Caco-2 (cell line): ENCODE measurements at regions of chr4 and their contacts with region 1.

Region 1: GRCh38 chr4:128809477-128810330 is at the start of gene JADE1:
- DNase-seq: peak; percentile 93 to 95
- H3K4me3 ChIP-seq: peak within 1 kb of the TSS; percentile 67
- H3K4me3 Mint-ChIP-seq: peak within 1 kb of the TSS; percentile 93
- H3K27ac Mint-ChIP-seq: peak within 1 kb of the TSS; percentile 97
- H3K4me1 ChIP-seq: peaks cover 26% of the 10 kb centered on the region
- H3K4me1 Mint-ChIP-seq: peaks cover 8% of the 10 kb centered on the region
- H3K27me3 ChIP-seq: no peaks in the 10 kb centered on the region
- H3K27me3 Mint-ChIP-seq: no peaks in the 10 kb centered on the region
- CTCF ChIP-seq: peak; percentile 57 to 78
- total RNA-seq, gene JADE1: 30.2 and 32.5 TPM in 2 replicates

Region 2: GRCh38 chr4:128364565-128364964 is 445.1 kb before region 1 on chr4:
- CTCF ChIA-PET with region 1: no interaction called
- POLR2A ChIA-PET with region 1: no interaction called
- intact Hi-C with region 1: no loop called
- DNase-seq: no peak
- H3K4me3 ChIP-seq: no peak overlapping the region
- H3K4me3 Mint-ChIP-seq: no peak overlapping the region
- H3K27ac Mint-ChIP-seq: no peak overlapping the region
- H3K4me1 ChIP-seq: no peaks in the 10 kb centered on the region
- H3K4me1 Mint-ChIP-seq: no peaks in the 10 kb centered on the region
- H3K27me3 ChIP-seq: no peaks in the 10 kb centered on the region
- H3K27me3 Mint-ChIP-seq: no peaks in the 10 kb centered on the region
- CTCF ChIP-seq: no peak

Region 3: GRCh38 chr4:128385683-128386304 is 423.9 kb before region 1 on chr4:
- CTCF ChIA-PET with region 1: no interaction called
- POLR2A ChIA-PET with region 1: no interaction called
- intact Hi-C with region 1: loop called (anchors 1 kb)
- DNase-seq: no peak
- H3K4me3 ChIP-seq: no peak overlapping the region
- H3K4me3 Mint-ChIP-seq: no peak overlapping the region
- H3K27ac Mint-ChIP-seq: no peak overlapping the region
- H3K4me1 ChIP-seq: peaks cover 32% of the 10 kb centered on the region
- H3K4me1 Mint-ChIP-seq: peaks cover 8% of the 10 kb centered on the region
- H3K27me3 ChIP-seq: no peaks in the 10 kb centered on the region
- H3K27me3 Mint-ChIP-seq: no peaks in the 10 kb centered on the region
- CTCF ChIP-seq: no peak

Region 4: DNA sequence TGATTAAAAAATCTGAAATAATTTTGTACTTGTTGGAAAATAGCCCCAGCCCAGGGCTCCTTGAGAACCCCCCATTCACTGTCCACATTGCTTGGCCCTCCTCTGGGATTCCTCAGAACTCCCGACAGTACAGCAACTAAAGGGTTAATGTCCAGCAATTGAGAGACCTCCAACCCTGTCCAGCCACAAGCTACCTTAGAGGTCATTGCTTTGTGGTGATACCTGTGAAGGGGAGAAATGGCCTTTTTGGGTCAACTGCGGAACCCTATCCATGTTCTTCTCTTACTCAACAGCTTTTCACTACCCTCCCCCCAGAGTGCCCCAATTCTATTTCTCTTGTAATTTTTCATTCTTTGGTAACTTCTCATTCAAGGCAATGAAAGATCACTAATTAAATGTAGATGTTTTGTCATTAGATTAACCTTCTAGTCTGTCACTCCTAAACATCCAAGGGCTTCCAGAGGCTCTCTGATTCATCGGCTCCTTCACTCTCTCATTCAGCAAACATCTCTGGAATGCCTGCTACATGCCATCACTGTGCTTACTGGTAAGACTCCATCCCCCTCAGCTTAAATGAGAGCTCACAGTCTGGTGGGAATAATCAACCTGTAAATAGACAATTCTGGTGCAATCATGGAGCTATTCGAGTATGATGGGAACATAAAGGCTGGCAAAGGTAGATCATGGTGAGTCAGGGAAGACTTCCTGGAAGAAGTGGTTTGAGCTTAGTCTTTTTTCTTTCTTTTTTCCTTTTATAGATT is 280.7 kb before region 1 on chr4:
- CTCF ChIA-PET with region 1: no interaction called
- POLR2A ChIA-PET with region 1: no interaction called
- intact Hi-C with region 1: loop called (anchors 1 kb)
- DNase-seq: peak; percentile 69 to 80
- H3K4me3 ChIP-seq: no peak overlapping the region
- H3K4me3 Mint-ChIP-seq: peak overlapping the region; percentile 46
- H3K27ac Mint-ChIP-seq: peak overlapping the region; percentile 95
- H3K4me1 ChIP-seq: peaks cover 49% of the 10 kb centered on the region
- H3K4me1 Mint-ChIP-seq: peaks cover 37% of the 10 kb centered on the region
- H3K27me3 ChIP-seq: no peaks in the 10 kb centered on the region
- H3K27me3 Mint-ChIP-seq: no peaks in the 10 kb centered on the region
- CTCF ChIP-seq: no peak

Region 5: GRCh38 chr4:128635141-128635954 is 174.4 kb before region 1 on chr4:
- CTCF ChIA-PET with region 1: no interaction called
- POLR2A ChIA-PET with region 1: no interaction called
- intact Hi-C with region 1: loop called (anchors 1 kb)
- DNase-seq: peak; percentile 89 to 90
- H3K4me3 ChIP-seq: 0 out of 2 replicates have a peak overlapping the region, but pooled peaks have one; percentile 11
- H3K4me3 Mint-ChIP-seq: peak overlapping the region; percentile 76
- H3K27ac Mint-ChIP-seq: peak overlapping the region; percentile 98
- H3K4me1 ChIP-seq: peaks cover 14% of the 10 kb centered on the region
- H3K4me1 Mint-ChIP-seq: peaks cover 25% of the 10 kb centered on the region
- H3K27me3 ChIP-seq: no peaks in the 10 kb centered on the region
- H3K27me3 Mint-ChIP-seq: no peaks in the 10 kb centered on the region
- CTCF ChIP-seq: no peak

Region 6: GRCh38 chr4:128793859-128794672 is 15.6 kb before region 1 on chr4:
- CTCF ChIA-PET with region 1: no interaction called
- POLR2A ChIA-PET with region 1: no interaction called
- intact Hi-C with region 1: no loop called
- DNase-seq: peak in 1 of 2 experiments; percentile 24
- H3K4me3 ChIP-seq: no peak overlapping the region
- H3K4me3 Mint-ChIP-seq: no peak overlapping the region
- H3K27ac Mint-ChIP-seq: peak overlapping the region; percentile 72
- H3K4me1 ChIP-seq: peaks cover 7% of the 10 kb centered on the region
- H3K4me1 Mint-ChIP-seq: peaks cover 7% of the 10 kb centered on the region
- H3K27me3 ChIP-seq: no peaks in the 10 kb centered on the region
- H3K27me3 Mint-ChIP-seq: no peaks in the 10 kb centered on the region
- CTCF ChIP-seq: no peak

Region 7: DNA sequence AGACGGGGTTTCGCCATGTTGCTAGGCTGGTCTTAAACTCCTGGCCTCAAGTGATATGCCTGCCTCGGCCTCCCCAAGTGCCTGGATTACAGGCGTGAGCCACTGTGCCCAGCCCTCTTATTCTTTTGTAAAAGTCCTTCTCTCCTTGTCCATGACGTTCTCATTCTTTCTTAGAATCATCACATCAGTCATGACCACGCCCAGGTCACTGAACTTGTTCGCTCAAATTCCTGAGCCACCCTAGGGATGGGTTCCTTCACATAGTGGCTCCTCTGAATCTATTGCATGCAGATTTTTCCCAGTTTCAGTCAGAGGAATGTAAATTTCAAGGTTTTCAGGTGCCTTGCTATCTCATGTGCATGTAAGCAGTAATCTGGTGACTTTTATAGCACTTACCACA is 15.5 kb after region 1 on chr4:
- CTCF ChIA-PET with region 1: no interaction called
- POLR2A ChIA-PET with region 1: no interaction called
- intact Hi-C with region 1: loop called (anchors 2 kb)
- DNase-seq: peak; percentile 67 to 78
- H3K4me3 ChIP-seq: no peak overlapping the region
- H3K4me3 Mint-ChIP-seq: no peak overlapping the region
- H3K27ac Mint-ChIP-seq: peak overlapping the region; percentile 91
- H3K4me1 ChIP-seq: peaks cover 50% of the 10 kb centered on the region
- H3K4me1 Mint-ChIP-seq: peaks cover 25% of the 10 kb centered on the region
- H3K27me3 ChIP-seq: no peaks in the 10 kb centered on the region
- H3K27me3 Mint-ChIP-seq: no peaks in the 10 kb centered on the region
- CTCF ChIP-seq: no peak

Region 8: DNA sequence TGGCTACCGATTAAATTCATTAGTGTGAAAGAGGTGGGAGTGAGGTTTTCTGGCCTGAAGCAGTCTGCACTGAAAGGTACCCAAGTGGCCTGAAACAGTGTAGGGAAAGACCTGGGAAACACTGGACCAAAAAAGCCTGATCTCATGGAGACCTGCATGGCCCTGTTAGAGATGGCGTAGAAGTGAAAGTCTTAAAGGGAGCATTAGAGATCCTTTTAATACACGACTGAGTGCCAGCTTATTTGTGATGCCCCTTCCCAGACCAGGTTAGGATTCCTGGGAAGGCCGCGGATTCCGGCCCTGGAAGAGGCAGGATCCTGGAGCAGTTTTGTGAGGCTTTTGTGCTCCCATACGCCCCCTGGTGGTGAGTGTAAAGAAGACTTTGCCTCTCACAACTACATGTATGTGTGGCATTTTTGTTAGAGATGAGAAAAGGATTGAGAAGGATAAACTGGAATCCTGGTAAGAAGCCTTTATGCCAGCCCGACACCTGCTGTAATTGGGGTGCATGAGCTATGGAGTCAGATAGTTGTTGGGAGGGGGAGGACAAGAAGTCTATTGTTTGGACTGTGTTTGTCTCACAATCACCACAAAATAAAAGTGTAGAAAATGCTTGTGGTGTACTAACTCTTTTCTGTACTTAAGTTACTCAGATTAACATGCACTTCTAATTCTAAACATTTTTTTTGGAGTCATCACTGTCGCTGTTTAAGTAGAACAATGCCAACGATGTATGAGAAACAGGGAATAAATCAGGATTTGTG is 53.8 kb after region 1 on chr4:
- CTCF ChIA-PET with region 1: interaction called, 4 read pairs
- POLR2A ChIA-PET with region 1: no interaction called
- intact Hi-C with region 1: loop called (anchors 1 kb)
- DNase-seq: peak; percentile 73 to 77
- H3K4me3 ChIP-seq: no peak overlapping the region
- H3K4me3 Mint-ChIP-seq: no peak overlapping the region
- H3K27ac Mint-ChIP-seq: peak overlapping the region; percentile 40
- H3K4me1 ChIP-seq: no peaks in the 10 kb centered on the region; the same call in 1 of the 2 replicates
- H3K4me1 Mint-ChIP-seq: peaks cover 23% of the 10 kb centered on the region
- H3K27me3 ChIP-seq: no peaks in the 10 kb centered on the region
- H3K27me3 Mint-ChIP-seq: no peaks in the 10 kb centered on the region
- CTCF ChIP-seq: peak; percentile 77 to 84